ENCODE measurements at regions of chr14 and their contacts with region 1.

Region 1: DNA sequence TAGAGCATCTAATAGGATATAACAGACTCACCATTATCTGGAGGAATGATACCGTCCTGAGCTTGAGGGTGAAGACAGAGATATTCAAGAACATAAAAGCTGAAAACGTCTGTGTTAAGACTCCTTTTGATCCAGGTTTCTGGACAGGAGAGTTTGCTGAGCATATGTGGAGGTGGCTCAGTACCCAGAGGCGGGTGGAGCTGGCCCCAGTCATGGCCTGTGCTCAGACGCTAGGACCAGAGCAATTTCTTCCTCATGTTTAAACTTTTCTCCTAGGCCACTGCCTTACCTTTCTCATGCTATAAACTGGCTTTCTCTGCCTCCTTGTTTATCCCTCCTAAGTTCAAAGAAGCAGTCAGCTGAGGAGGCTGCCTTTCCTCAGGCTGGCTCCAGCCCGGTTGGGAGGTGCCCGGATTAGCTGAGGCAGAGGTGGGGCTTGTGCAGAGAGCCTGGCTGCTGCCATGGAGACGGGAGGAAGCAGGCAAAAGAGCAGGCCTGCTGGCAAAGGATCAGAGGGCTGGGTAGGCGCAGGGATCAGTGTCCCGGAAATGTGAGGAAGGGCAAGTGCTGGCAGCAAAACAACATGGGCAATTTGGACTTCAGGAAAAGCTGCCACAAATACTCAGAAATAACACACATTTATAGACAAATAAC is 13.7 kb downstream of the COA8 start:
- DNase-seq: peak; percentile 95 to 96 (median 96)
- ATAC-seq: peak; percentile 97
- H3K4me3 ChIP-seq: no peak overlapping the region
- H3K27ac ChIP-seq: peak overlapping the region; percentile 39
- H3K4me1 ChIP-seq: no peaks in the 10 kb centered on the region
- H3K27me3 ChIP-seq: no peaks in the 10 kb centered on the region

Region 2: GRCh38 chr14:103624859-103625258 is 48.4 kb after region 1 on chr14:
- intact Hi-C with region 1: no loop called
- DNase-seq: peak; percentile 88 to 89 (median 89)
- ATAC-seq: peak; percentile 52 to 79
- H3K4me3 ChIP-seq: no peak overlapping the region
- H3K27ac ChIP-seq: no peak overlapping the region
- H3K4me1 ChIP-seq: peaks cover 4% of the 10 kb centered on the region
- H3K27me3 ChIP-seq: no peaks in the 10 kb centered on the region

Region 3: GRCh38 chr14:103684471-103684870 is 108.0 kb after region 1 on chr14:
- intact Hi-C with region 1: no loop called
- DNase-seq: peak in 1 of 3 donors; percentile 67
- ATAC-seq: peak in 1 of 2 donors; percentile 19
- H3K4me3 ChIP-seq: no peak overlapping the region
- H3K27ac ChIP-seq: no peak overlapping the region
- H3K4me1 ChIP-seq: peaks cover 3% of the 10 kb centered on the region
- H3K27me3 ChIP-seq: no peaks in the 10 kb centered on the region

Region 4: GRCh38 chr14:103696466-103697071 is 120.1 kb after region 1 on chr14:
- intact Hi-C with region 1: loop called in 1 of 4 experiments (anchors 10 kb)
- DNase-seq: peak; percentile 61 to 90 (median 88)
- ATAC-seq: peak; percentile 33 to 49
- H3K4me3 ChIP-seq: no peak overlapping the region
- H3K27ac ChIP-seq: peak overlapping the region; percentile 48
- H3K4me1 ChIP-seq: peaks cover 8% of the 10 kb centered on the region
- H3K27me3 ChIP-seq: no peaks in the 10 kb centered on the region

Region 5: GRCh38 chr14:103819503-103820307 is 243.2 kb after region 1 on chr14:
- intact Hi-C with region 1: no loop called
- DNase-seq: peak; percentile 52 to 75 (median 73)
- ATAC-seq: peak; percentile 76 to 89
- H3K4me3 ChIP-seq: peak overlapping the region; percentile 15
- H3K27ac ChIP-seq: peak overlapping the region; percentile 91
- H3K4me1 ChIP-seq: peaks cover 6% of the 10 kb centered on the region
- H3K27me3 ChIP-seq: no peaks in the 10 kb centered on the region

Measured in right cardiac atrium (tissue), 5 donors.